ENCODE measurements at regions of chr1 and their contacts with region 1.

Region 1: DNA sequence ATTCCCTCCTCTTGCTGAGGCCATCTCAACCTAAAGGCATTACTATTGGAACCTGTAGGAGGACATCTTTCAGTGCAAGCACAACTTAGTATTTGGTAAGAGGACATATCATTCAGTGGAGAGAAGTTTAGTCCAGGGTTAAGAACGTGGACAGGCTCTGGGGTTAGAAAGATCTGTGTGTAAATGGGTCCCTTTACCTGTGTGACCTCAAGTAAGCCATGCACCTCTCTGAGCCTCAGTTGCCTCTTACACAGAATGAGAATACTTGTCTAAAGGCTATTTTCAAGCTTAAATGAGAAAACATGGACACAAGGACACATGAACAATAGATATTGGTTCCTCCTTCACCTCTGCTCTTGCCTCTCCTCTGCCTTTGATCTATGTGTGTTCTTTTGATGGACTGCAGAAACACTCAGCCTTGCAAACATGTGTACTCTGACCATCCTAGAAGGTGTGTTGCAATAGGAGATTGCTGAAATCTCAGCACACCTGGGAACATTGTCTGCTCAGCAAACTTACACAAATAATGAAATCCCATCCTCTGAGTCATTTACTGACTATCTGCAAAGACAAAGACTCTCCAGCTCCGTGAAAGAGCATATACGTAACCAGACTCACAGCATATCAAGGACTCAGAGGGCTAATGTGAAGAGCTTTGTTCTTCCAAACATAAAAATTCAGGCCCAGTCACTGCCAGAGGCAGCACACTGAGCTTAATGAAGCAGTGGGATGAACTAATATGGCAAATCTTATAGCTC is 143.8 kb downstream of the DAB1 start:
- DNase-seq: peak; percentile 81
- H3K27ac ChIP-seq: no peak overlapping the region
- CTCF ChIP-seq: no peak

Region 2: DNA sequence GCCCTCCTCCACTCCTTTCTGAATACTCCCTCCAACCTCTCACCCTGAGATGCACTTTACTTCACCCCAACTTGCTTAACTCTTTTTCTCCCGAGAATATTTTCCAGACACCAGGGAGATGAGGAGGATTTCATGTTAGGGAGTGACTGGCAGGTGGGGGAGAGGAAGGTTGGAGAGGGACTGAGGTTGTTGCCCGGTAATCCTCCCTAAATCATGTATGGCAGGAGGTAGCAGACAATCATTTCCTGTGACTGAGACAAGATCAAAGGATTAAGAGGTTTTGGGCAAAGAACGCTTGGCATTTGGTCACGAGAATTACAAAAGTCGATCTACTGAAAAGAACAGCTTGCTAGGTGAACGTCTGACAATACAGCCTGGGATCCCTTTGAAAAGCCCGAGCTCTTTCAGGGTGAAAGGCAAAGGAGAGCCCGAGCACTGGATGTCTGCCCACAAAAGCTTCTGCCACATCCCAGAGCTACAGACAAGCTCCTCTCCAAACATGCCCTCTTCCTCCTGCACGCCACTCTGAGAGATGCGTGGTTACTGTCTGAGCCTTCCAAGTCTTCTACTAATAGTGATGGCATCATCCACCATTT is 10.4 kb before region 1 on chr1:
- CTCF ChIA-PET with region 1: no interaction called
- POLR2A ChIA-PET with region 1: no interaction called
- DNase-seq: no peak
- H3K27ac ChIP-seq: no peak overlapping the region
- CTCF ChIP-seq: no peak

Region 3: GRCh38 chr1:57294177-57294576 is 14.1 kb after region 1 on chr1:
- CTCF ChIA-PET with region 1: interaction called, 13 read pairs
- POLR2A ChIA-PET with region 1: no interaction called
- DNase-seq: no peak
- H3K27ac ChIP-seq: no peak overlapping the region
- CTCF ChIP-seq: no peak

Measured in RWPE1 (cell line).